Sigmoid colon (tissue), 7 donors: ENCODE measurements at regions of chr1 and their contacts with region 1.

Region 1: GRCh38 chr1:88983791-88984559 is 8.5 kb downstream of the KYAT3 start:
- DNase-seq: no peak
- H3K4me3 ChIP-seq: peak overlapping the region in 1 of 4 donors; percentile 1
- H3K27ac ChIP-seq: peak overlapping the region; percentile 20 to 55 (median 45)
- H3K4me1 ChIP-seq: peaks cover 0 to 49% (median 33%) of the 10 kb centered on the region in 4 donors
- H3K27me3 ChIP-seq: no peaks in the 10 kb centered on the region
- CTCF ChIP-seq: peak; percentile 47 to 69 (median 56)
- EP300 ChIP-seq: no peak
- POLR2A ChIP-seq: no peak

Region 2: GRCh38 chr1:88891318-88891950 is 92.5 kb before region 1 on chr1 and contains the start of gene GTF2B:
- intact Hi-C with region 1: no loop called
- DNase-seq: peak; percentile 97
- H3K4me3 ChIP-seq: peak within 1 kb of the TSS; percentile 81 to 100 (median 86)
- H3K27ac ChIP-seq: peak within 1 kb of the TSS; percentile 94 to 98 (median 96)
- H3K4me1 ChIP-seq: peaks cover 0 to 29% (median 21%) of the 10 kb centered on the region in 4 donors
- H3K27me3 ChIP-seq: no peaks in the 10 kb centered on the region
- CTCF ChIP-seq: no peak
- EP300 ChIP-seq: peak in 2 of 4 donors; percentile 64 to 83
- POLR2A ChIP-seq: peak; percentile 89 to 92
- total RNA-seq, gene GTF2B: 21.6 to 42.6 (median 31.3) TPM

Region 3: DNA sequence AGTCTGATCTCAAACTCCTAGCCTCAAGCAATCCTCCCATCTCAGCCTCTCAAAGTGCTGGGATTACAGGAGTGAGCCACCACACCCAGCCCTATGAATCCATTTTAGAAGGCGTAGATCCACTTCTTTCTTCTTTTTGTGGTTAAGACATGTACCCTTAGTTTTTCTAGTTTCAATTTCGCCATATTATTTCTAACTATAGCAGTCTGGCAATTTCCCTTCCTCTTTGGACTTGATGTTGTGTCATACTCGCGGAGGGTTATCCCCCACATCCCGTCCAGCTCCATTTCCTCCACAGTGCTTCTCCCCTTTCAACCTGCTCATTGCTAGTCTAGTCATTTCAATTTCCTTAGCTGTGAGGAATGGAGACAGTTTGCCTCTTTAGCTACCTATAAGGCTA is 831.6 kb after region 1 on chr1:
- intact Hi-C with region 1: loop called (anchors 10 kb)
- DNase-seq: no peak
- H3K4me3 ChIP-seq: no peak overlapping the region
- H3K27ac ChIP-seq: no peak overlapping the region
- H3K4me1 ChIP-seq: peaks cover 0 to 41% (median 32%) of the 10 kb centered on the region in 4 donors
- H3K27me3 ChIP-seq: no peaks in the 10 kb centered on the region
- CTCF ChIP-seq: no peak
- EP300 ChIP-seq: no peak
- POLR2A ChIP-seq: no peak

Region 4: DNA sequence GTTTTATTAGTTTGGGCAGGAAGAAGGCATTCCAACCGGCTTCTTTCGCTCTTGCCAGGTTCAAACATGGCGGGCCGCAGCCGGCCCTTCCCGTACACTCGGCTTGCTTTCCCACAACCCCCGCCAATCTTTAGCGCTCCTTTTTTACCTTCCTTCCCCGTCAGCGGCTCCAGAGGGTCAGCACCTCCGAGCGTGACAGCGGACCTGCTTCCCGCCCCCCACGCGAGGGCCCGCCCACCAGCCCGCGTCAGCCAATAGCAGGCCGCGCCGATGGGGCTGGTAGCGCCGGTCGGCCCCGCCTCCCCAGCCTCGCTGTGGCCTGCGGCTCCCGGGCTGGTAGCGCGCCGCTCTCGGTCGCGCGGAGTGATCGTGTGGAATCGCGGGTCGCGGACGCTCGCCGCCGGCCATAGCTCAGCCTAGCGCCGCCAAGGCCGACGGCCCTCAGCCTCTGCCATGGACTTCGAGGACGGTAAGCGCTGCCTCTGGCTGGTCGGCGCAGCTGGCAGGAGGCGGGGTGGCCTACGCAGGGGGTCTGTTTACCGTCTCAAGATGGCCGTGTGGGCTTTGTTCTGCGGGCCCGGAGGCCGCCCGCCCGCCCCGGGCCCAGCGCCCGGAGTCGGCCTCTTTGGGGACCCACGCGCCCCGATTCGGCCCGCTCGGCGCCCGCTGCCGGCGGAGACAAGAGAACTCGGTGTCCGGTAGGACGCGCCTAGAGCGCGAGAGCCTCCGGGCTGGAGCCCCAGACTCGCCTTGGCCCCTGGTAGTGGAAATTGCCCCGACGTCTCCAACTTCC is 1011.0 kb after region 1 on chr1 and contains the start of gene ZNF326:
- intact Hi-C with region 1: loop called (anchors 5 kb)
- DNase-seq: peak; percentile 97
- H3K4me3 ChIP-seq: peak within 1 kb of the TSS; percentile 63 to 78 (median 76)
- H3K27ac ChIP-seq: peak within 1 kb of the TSS; percentile 93 to 98 (median 95)
- H3K4me1 ChIP-seq: peaks cover 0 to 41% (median 29%) of the 10 kb centered on the region in 4 donors
- H3K27me3 ChIP-seq: no peaks in the 10 kb centered on the region
- CTCF ChIP-seq: no peak
- EP300 ChIP-seq: peak in 1 of 4 donors; percentile 6
- POLR2A ChIP-seq: peak; percentile 83 to 87
- total RNA-seq, gene ZNF326: 16.0 to 24.4 (median 18.1) TPM